ENCODE measurements at regions of chr21 and their contacts with region 1.

Region 1: DNA sequence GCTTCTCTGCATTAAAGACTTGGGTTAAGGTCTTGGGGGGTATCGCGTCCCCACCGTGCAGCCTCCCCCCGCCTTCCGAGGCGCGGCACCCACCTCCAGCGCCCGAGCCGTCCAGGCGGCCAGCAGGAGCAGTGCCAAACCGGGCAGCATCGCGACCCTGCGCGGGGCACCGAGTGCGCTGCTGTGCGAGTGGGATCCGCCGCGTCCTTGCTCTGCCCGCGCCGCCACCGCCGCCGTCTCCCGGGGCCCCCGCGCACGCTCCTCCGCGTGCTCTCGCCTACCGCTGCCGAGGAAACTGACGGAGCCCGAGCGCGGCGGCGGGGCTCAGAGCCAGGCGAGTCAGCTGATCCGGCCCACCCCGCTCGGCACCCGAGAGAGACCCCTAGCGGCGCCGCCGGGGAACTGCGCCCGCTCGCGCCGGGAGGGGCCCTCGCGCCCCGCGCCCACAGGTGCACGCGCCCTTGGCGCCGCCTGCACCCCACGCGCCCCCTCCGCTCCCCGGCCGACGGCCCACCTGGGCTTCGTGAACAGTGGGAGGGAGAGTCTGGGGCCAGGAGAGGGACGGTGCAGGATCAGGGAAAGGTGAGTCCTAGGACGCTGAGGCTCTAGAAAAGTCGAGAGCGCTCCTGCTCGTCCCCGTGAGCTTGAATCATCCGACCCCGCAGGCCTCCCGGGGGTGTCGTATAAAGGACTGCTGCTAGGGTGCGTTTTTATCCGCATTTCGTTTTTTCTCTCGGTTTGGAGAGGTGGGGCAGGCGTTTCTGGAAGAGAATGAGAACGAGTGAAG is at the start of gene APP:
- DNase-seq: peak; percentile 81 to 99 (median 91)
- ATAC-seq: peak; percentile 95
- H3K4me3 ChIP-seq: peak within 1 kb of the TSS; percentile 67
- H3K4me3 Mint-ChIP-seq: peak within 1 kb of the TSS; percentile 91 to 99 (median 96)
- H3K27ac ChIP-seq: peak within 1 kb of the TSS; percentile 68
- H3K27ac Mint-ChIP-seq: peak within 1 kb of the TSS; percentile 68 to 94 (median 79)
- H3K4me1 ChIP-seq: peaks cover 0 to 6% of the 10 kb centered on the region in 2 donors
- H3K4me1 Mint-ChIP-seq: peaks cover 5 to 37% (median 22%) of the 10 kb centered on the region in 7 donors
- H3K27me3 ChIP-seq: no peaks in the 10 kb centered on the region
- H3K27me3 Mint-ChIP-seq: no peaks in the 10 kb centered on the region
- total RNA-seq, gene APP: 43.1 to 68.0 (median 56.2) TPM

Region 2: GRCh38 chr21:25607151-25608043 is 563.3 kb before region 1 on chr21 and contains the start of gene MRPL39:
- CTCF ChIA-PET with region 1: interaction called, 6 read pairs
- POLR2A ChIA-PET with region 1: no interaction called
- intact Hi-C with region 1: loop called (anchors 1 kb)
- DNase-seq: peak; percentile 74 to 88 (median 82)
- ATAC-seq: peak; percentile 93
- H3K4me3 ChIP-seq: peak within 1 kb of the TSS; percentile 90
- H3K4me3 Mint-ChIP-seq: peak within 1 kb of the TSS; percentile 89 to 100 (median 100)
- H3K27ac ChIP-seq: peak within 1 kb of the TSS; percentile 76
- H3K27ac Mint-ChIP-seq: peak within 1 kb of the TSS; percentile 91 to 100 (median 99)
- H3K4me1 ChIP-seq: peaks cover 17 to 21% of the 10 kb centered on the region in 2 donors
- H3K4me1 Mint-ChIP-seq: peaks cover 18 to 53% (median 47%) of the 10 kb centered on the region in 7 donors
- H3K27me3 ChIP-seq: no peaks in the 10 kb centered on the region
- H3K27me3 Mint-ChIP-seq: peaks cover 0 to 2% (median 0%) of the 10 kb centered on the region in 5 donors
- total RNA-seq, gene MRPL39: 7.6 to 35.7 (median 19.5) TPM

Region 3: DNA sequence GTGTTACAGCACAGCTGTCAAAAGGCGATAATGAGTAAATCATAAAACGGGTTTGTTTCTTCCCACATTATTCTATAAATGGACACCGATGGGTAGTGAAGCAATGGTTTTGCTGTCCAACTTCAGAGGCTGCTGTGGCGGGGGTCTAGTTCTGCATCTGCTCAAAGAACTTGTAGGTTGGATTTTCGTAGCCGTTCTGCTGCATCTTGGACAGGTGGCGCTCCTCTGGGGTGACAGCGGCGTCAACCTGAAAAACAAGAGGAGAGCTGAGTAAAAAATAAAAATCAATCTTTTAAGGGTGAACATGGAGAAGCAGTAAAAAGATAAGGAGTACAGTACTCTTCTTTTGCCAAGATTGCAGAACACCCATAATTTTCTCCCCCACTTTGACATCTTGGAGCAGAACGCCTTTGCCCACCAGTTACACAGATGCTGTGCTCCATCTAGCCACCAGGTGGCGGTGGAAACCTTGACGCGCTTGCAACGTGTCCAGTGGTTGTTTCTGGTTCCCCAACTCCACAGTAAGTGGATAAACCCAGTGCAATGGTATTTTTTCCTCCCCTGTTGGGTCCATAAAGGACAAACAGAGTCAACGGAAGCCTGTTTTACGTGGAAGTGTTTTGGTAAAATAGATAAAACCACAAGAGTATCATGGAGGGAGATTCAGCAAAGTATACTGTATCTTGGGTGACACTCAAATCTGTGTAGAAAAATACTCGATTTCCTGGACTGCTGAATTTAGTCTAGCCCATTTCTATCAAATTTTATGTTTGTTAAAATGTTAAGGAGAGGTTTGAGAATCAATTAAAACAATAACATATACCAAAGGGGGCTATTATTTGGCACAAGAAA is 288.9 kb before region 1 on chr21:
- CTCF ChIA-PET with region 1: interaction called, 5 read pairs
- POLR2A ChIA-PET with region 1: no interaction called
- intact Hi-C with region 1: loop called (anchors 1 kb)
- DNase-seq: peak; percentile 27 to 66 (median 54)
- ATAC-seq: peak; percentile 81
- H3K4me3 ChIP-seq: no peak overlapping the region
- H3K4me3 Mint-ChIP-seq: no peak overlapping the region
- H3K27ac ChIP-seq: no peak overlapping the region
- H3K27ac Mint-ChIP-seq: no peak overlapping the region
- H3K4me1 ChIP-seq: no peaks in the 10 kb centered on the region
- H3K4me1 Mint-ChIP-seq: peaks cover 0 to 2% (median 0%) of the 10 kb centered on the region in 7 donors
- H3K27me3 ChIP-seq: no peaks in the 10 kb centered on the region
- H3K27me3 Mint-ChIP-seq: peaks cover 0 to 3% (median 0%) of the 10 kb centered on the region in 5 donors

Region 4: DNA sequence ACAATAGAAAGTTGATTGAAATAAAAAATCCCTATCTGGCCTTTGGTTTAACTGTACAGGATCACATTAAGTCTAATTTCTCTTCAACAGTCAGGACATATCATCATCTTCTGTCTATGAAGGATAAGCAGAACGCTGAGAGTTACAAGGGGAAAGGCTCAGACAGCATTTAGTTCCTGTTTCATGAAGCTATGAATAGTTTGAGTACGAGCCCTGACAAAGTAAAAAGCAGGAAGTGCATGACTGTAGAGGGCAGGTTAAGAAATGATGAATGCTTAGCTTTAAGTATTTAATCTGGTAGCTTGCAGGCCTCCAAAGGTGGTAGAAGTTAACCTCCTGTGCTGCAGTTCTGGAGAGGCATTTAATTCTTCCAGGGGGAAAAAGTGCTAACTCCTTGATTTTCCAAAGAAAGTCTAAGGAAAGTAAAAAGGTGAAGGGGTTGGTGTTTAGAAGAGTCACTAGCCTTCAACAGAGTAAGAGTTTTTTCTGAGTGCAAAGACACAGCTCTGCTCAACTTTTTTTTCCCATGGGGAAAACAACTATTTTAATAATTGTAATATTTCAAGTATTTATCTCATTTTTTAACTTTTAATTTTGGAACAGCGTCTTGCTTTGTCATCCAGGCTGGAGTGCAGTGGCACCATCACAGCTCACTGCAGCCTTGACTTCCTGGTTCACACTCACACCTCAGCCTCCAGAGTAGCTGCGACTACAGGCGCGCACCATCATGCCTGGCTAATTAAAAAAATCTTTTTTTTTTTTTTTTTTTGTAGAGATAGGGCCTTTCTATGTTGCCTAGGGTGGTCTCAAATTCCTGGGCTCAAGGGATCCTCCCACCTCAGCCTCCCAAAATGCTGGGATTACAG is 202.9 kb before region 1 on chr21:
- CTCF ChIA-PET with region 1: no interaction called
- POLR2A ChIA-PET with region 1: interaction called, 5 read pairs
- intact Hi-C with region 1: loop called in 1 of 2 experiments (anchors 2 kb)
- DNase-seq: peak in 6 of 9 donors; percentile 4 to 41 (median 20)
- ATAC-seq: peak; percentile 84
- H3K4me3 ChIP-seq: no peak overlapping the region
- H3K4me3 Mint-ChIP-seq: peak overlapping the region in 7 of 10 donors; percentile 50 to 68 (median 65)
- H3K27ac ChIP-seq: peak overlapping the region; percentile 51
- H3K27ac Mint-ChIP-seq: peak overlapping the region; percentile 67 to 86 (median 82)
- H3K4me1 ChIP-seq: no peaks in the 10 kb centered on the region
- H3K4me1 Mint-ChIP-seq: peaks cover 5 to 19% (median 14%) of the 10 kb centered on the region in 7 donors
- H3K27me3 ChIP-seq: no peaks in the 10 kb centered on the region
- H3K27me3 Mint-ChIP-seq: no peaks in the 10 kb centered on the region

Region 5: GRCh38 chr21:26070822-26071425 is 99.7 kb before region 1 on chr21:
- CTCF ChIA-PET with region 1: interaction called, 3 read pairs
- POLR2A ChIA-PET with region 1: interaction called, 3 read pairs
- intact Hi-C with region 1: loop called (anchors 1 to 2 kb)
- DNase-seq: peak in 7 of 9 donors; percentile 36 to 61 (median 51)
- ATAC-seq: peak; percentile 85
- H3K4me3 ChIP-seq: peak overlapping the region; percentile 24
- H3K4me3 Mint-ChIP-seq: peak overlapping the region; percentile 75 to 94 (median 86)
- H3K27ac ChIP-seq: peak overlapping the region; percentile 57
- H3K27ac Mint-ChIP-seq: peak overlapping the region; percentile 87 to 94 (median 91)
- H3K4me1 ChIP-seq: peaks cover 0 to 38% of the 10 kb centered on the region in 2 donors
- H3K4me1 Mint-ChIP-seq: peaks cover 23 to 69% (median 55%) of the 10 kb centered on the region in 7 donors
- H3K27me3 ChIP-seq: no peaks in the 10 kb centered on the region
- H3K27me3 Mint-ChIP-seq: no peaks in the 10 kb centered on the region

Region 6: DNA sequence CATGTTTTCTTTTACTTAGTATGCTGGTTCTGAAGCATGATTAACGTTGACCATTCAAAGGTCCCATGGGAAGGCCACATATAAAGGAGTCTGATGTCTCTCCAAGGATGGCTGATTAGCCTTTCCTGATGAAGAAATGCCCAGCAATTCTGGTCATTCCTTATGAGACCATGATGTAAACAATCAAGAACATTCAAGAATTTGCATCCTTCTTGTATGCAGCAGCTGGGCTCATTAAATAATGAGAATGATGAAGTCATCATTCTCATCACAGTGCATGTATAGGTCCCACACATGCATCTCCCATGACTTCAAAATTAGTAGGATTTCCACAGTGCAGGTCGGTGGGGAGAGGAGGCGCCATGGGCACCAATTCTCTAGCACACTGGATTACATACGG is 85.5 kb before region 1 on chr21:
- CTCF ChIA-PET with region 1: no interaction called
- POLR2A ChIA-PET with region 1: no interaction called
- intact Hi-C with region 1: no loop called
- DNase-seq: no peak
- ATAC-seq: no peak
- H3K4me3 ChIP-seq: no peak overlapping the region
- H3K4me3 Mint-ChIP-seq: no peak overlapping the region
- H3K27ac ChIP-seq: no peak overlapping the region
- H3K27ac Mint-ChIP-seq: no peak overlapping the region
- H3K4me1 ChIP-seq: no peaks in the 10 kb centered on the region
- H3K4me1 Mint-ChIP-seq: peaks cover 6 to 37% (median 26%) of the 10 kb centered on the region in 7 donors
- H3K27me3 ChIP-seq: no peaks in the 10 kb centered on the region
- H3K27me3 Mint-ChIP-seq: no peaks in the 10 kb centered on the region

Region 7: DNA sequence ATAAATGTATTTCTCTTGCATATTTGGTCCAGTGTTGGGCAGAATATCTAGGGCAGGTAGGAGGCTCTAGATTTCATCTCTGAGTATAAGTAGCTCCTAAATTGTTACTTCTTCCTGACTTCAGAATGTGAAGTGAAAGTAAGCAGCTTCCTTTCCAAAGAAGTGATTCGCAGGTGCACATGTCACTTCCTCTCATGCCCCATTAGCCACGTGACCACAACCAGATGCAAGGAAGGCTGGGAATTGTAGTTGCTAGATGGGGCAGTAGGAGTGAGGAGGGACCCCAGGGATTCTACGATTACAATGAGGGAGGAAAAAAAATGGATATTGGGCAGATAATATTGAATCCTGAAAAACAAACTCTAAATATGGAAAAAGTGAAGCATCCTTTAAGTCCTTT is 515.6 kb after region 1 on chr21:
- CTCF ChIA-PET with region 1: no interaction called
- POLR2A ChIA-PET with region 1: no interaction called
- intact Hi-C with region 1: loop called in 1 of 2 experiments (anchors 10 kb)
- DNase-seq: peak in 7 of 9 donors; percentile 22 to 57 (median 47)
- ATAC-seq: peak; percentile 66
- H3K4me3 ChIP-seq: no peak overlapping the region
- H3K4me3 Mint-ChIP-seq: peak overlapping the region in 8 of 10 donors; percentile 0 to 58 (median 40)
- H3K27ac ChIP-seq: no peak overlapping the region
- H3K27ac Mint-ChIP-seq: peak overlapping the region in 7 of 9 donors; percentile 4 to 86 (median 60)
- H3K4me1 ChIP-seq: no peaks in the 10 kb centered on the region
- H3K4me1 Mint-ChIP-seq: peaks cover 0 to 7% (median 5%) of the 10 kb centered on the region in 7 donors
- H3K27me3 ChIP-seq: no peaks in the 10 kb centered on the region
- H3K27me3 Mint-ChIP-seq: peaks cover 0 to 5% (median 0%) of the 10 kb centered on the region in 5 donors

Measured in naive thymus-derived CD4-positive, alpha-beta T cell (primary cell).